ENCODE measurements at regions of chr11 and their contacts with region 1.

Region 1: DNA sequence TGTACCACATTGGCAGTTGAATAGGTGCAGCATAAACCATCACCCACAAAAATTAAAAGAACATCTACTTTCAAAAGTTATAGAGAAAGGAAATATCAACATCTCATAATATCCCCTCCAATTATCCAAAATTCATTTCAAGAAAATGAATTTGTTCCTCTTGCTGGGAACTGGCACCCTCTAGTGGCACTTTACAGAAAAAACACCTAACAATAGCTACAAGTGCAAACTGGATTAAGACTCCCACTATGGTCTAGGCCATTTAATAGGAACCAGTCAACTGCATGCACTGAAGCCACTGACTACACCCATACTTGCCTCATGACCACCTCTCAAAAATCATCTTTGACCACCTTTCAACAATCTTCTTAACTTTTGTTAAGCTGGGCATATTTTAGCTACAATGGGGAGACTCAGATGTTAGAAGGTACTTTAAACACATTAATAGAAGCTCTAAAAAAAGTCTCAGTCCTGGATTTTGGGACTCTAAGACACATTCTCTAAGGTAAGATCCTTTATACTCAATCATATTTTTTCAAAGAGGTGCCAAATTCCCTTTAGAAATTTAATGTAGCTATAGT is 17.3 kb downstream of the TRAF6 start:
- DNase-seq: no peak
- H3K4me3 ChIP-seq: no peak overlapping the region
- H3K27ac ChIP-seq: no peak overlapping the region
- H3K4me1 ChIP-seq: no peaks in the 10 kb centered on the region
- H3K27me3 ChIP-seq: no peaks in the 10 kb centered on the region
- CTCF ChIP-seq: peak; percentile 95

Region 2: DNA sequence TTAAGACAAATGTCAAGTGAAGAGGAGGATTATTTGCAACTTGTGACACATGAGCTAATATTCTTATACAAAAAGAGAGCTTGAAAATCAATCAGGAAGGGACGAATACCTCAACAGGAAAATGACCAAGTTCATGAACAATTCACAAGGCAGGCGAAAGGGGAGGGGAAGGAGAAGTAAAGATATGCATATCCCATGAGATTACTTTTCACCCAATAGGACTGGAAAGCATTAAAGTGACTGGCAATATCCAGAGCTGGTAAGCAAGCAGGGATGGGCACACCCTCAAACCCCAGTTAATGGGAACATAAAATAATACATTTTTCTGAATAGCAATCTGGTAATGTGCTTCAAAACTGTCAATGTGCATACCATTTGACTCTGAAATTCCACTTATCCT is 1203.0 kb before region 1 on chr11:
- CTCF ChIA-PET with region 1: no interaction called
- POLR2A ChIA-PET with region 1: interaction called, 22 read pairs
- intact Hi-C with region 1: no loop called
- DNase-seq: no peak
- H3K4me3 ChIP-seq: no peak overlapping the region
- H3K27ac ChIP-seq: no peak overlapping the region
- H3K4me1 ChIP-seq: peaks cover 5% of the 10 kb centered on the region; the same call in 1 of the 2 replicates
- H3K27me3 ChIP-seq: no peaks in the 10 kb centered on the region
- CTCF ChIP-seq: no peak

Region 3: GRCh38 chr11:36056160-36056751 is 436.6 kb before region 1 on chr11:
- CTCF ChIA-PET with region 1: no interaction called
- POLR2A ChIA-PET with region 1: no interaction called
- intact Hi-C with region 1: loop called (anchors 10 kb)
- DNase-seq: peak; percentile 42 to 46
- H3K4me3 ChIP-seq: no peak overlapping the region
- H3K27ac ChIP-seq: no peak overlapping the region
- H3K4me1 ChIP-seq: no peaks in the 10 kb centered on the region
- H3K27me3 ChIP-seq: no peaks in the 10 kb centered on the region
- CTCF ChIP-seq: peak; percentile 79

Region 4: GRCh38 chr11:36577859-36578258 is 85.0 kb after region 1 on chr11:
- CTCF ChIA-PET with region 1: no interaction called
- POLR2A ChIA-PET with region 1: no interaction called
- intact Hi-C with region 1: no loop called
- DNase-seq: no peak
- H3K4me3 ChIP-seq: no peak overlapping the region
- H3K27ac ChIP-seq: no peak overlapping the region
- H3K4me1 ChIP-seq: no peaks in the 10 kb centered on the region
- H3K27me3 ChIP-seq: no peaks in the 10 kb centered on the region
- CTCF ChIP-seq: no peak

Region 5: DNA sequence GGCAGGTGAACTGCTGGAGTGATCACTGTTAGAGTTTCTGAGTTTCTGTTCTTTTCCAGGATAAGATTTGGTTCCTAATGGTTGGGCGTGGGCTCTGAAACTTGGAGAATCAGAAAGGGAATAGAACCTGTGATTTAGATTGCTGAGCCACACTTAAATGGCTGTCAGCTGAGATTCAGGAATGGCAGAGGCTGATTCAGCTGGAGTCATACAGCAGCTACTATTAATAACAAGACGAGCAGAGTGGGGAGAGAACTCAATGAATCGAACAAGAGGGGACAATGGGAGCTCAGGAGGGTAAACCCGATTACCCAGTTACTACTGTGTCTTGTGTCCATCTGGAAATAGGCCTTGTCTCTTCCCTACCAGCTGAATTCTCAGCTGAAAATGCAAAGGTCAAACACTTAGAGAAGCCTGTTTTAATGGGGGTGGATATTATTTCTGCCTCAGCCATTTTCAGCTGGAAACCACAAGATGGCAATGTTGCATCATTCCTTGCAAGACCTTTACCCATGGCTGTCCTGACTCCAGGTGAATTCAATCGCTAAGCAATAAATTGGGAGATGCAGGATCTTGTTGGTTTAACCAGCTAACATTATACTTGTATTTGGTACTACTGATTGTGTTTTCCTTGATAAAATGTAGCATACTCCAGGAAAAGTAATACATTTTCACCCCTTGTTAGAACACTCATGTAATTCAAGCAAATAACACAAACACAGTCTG is 209.7 kb after region 1 on chr11:
- CTCF ChIA-PET with region 1: interaction called, 25 read pairs
- POLR2A ChIA-PET with region 1: no interaction called
- intact Hi-C with region 1: no loop called
- DNase-seq: peak; percentile 10 to 46
- H3K4me3 ChIP-seq: no peak overlapping the region
- H3K27ac ChIP-seq: no peak overlapping the region
- H3K4me1 ChIP-seq: no peaks in the 10 kb centered on the region
- H3K27me3 ChIP-seq: peaks cover 37% of the 10 kb centered on the region
- CTCF ChIP-seq: peak; percentile 79

Measured in PC-9 (cell line).